Activated CD8-positive, alpha-beta T cell treated with anti-CD3 and anti-CD28 coated beads for 36 hours (primary cell): ENCODE measurements at regions of chr12 and their contacts with region 1.

Region 1: DNA sequence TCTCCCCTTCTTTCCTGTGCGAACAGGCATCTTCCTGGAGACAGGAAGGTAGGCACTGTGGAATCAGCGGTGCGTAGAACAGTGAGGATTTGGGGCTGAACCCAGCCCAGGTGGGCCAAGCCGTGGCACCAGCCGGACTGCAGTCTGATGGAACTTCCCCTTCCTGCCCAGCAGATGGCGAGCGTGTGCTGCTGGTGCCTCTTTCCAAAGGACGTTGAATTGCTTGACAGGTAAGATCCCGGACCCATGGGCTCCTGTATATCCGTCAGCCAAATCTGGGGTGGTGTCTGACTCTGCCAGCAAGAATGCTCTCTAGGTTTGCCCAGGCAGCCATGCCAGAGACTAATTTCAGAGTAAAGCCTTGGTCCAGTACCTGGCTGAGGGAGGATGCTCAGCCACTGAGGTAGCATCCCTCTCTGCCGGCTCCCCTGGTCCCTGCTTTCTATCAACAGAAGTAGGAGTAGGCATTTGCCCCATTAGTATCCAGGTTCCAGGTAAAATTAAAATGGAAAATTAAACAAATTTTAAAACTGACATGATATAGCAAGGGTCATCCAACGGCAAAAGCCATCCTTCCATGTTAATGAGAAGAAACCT is 21.1 kb upstream of the KCNA5 start:
- DNase-seq: peak; percentile 53
- ATAC-seq: peak; percentile 58
- H3K4me3 Mint-ChIP-seq: no peak overlapping the region
- H3K27ac Mint-ChIP-seq: no peak overlapping the region
- H3K4me1 Mint-ChIP-seq: no peaks in the 10 kb centered on the region
- H3K27me3 Mint-ChIP-seq: peaks cover 14% of the 10 kb centered on the region
- CTCF ChIP-seq: peak; percentile 88

Region 2: GRCh38 chr12:4960030-4960429 is 62.5 kb before region 1 on chr12:
- CTCF ChIA-PET with region 1: no interaction called
- POLR2A ChIA-PET with region 1: no interaction called
- intact Hi-C with region 1: no loop called
- DNase-seq: no peak
- ATAC-seq: no peak
- H3K4me3 Mint-ChIP-seq: no peak overlapping the region
- H3K27ac Mint-ChIP-seq: no peak overlapping the region
- H3K4me1 Mint-ChIP-seq: no peaks in the 10 kb centered on the region
- H3K27me3 Mint-ChIP-seq: peaks cover 25% of the 10 kb centered on the region
- CTCF ChIP-seq: no peak

Region 3: GRCh38 chr12:5034603-5035002 is 12.0 kb after region 1 on chr12:
- CTCF ChIA-PET with region 1: interaction called, 11 read pairs
- POLR2A ChIA-PET with region 1: no interaction called
- intact Hi-C with region 1: no loop called
- DNase-seq: peak; percentile 12
- ATAC-seq: peak; percentile 72
- H3K4me3 Mint-ChIP-seq: no peak overlapping the region
- H3K27ac Mint-ChIP-seq: no peak overlapping the region
- H3K4me1 Mint-ChIP-seq: no peaks in the 10 kb centered on the region
- H3K27me3 Mint-ChIP-seq: peaks cover 6% of the 10 kb centered on the region
- CTCF ChIP-seq: no peak

Region 4: GRCh38 chr12:5083955-5084849 is 61.6 kb after region 1 on chr12:
- CTCF ChIA-PET with region 1: interaction called, 16 read pairs
- POLR2A ChIA-PET with region 1: no interaction called
- intact Hi-C with region 1: loop called (anchors 2 kb)
- DNase-seq: peak; percentile 39
- ATAC-seq: no peak
- H3K4me3 Mint-ChIP-seq: no peak overlapping the region
- H3K27ac Mint-ChIP-seq: no peak overlapping the region
- H3K4me1 Mint-ChIP-seq: no peaks in the 10 kb centered on the region
- H3K27me3 Mint-ChIP-seq: no peaks in the 10 kb centered on the region
- CTCF ChIP-seq: peak; percentile 64

Region 5: GRCh38 chr12:5244513-5244972 is 222.0 kb after region 1 on chr12:
- CTCF ChIA-PET with region 1: no interaction called
- POLR2A ChIA-PET with region 1: no interaction called
- intact Hi-C with region 1: no loop called
- DNase-seq: no peak
- ATAC-seq: no peak
- H3K4me3 Mint-ChIP-seq: no peak overlapping the region
- H3K27ac Mint-ChIP-seq: no peak overlapping the region
- H3K4me1 Mint-ChIP-seq: no peaks in the 10 kb centered on the region
- H3K27me3 Mint-ChIP-seq: no peaks in the 10 kb centered on the region
- CTCF ChIP-seq: no peak